ENCODE measurements at regions of chr4 and their contacts with region 1.

Region 1: DNA sequence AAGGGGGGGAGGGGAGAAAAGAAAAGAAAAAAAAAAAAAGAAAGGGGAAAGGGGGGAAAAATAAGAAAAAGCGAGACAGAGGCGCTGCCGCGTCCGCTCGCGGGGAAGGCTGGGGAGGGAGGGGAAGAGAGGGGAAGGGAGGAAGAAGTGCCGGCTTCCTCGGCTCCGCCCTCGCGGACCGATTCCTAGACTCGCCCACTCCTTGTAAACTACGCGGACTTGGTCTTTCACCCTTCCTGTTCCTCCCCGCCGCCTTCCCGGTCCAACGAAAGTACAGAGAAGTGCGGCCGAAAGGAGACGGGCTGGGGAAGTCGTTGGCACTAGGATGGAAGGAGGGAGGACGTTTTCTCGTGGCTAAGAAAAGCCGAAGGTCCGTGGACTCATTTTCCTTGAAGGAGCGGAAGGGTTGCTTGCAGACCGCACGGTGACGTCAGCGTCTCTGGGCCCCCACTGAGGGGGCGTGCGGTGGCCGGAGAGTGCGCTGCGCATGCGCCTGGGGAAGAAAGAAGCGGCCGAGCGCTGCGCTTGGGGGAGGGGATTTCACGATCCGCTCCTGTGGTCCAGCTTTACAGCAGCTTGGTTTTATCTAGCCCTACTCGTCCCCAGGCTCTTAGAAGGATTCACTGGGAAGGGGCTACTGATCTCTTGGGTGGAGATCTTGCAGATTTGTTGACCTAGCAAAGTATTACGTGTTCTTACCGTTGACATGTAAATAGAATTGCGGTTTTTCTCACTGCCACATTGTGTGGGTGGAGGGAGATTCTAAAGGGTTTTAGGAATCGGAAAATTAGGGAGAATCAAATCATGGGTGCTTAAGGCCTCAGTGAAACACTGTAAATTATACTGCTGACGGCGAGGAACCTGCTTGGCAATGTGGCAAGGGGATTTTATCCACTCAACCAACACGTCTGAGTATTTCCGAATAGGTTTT is at the start of gene CCNI:
- DNase-seq: peak; percentile 100
- ATAC-seq: peak; percentile 75
- H3K4me3 ChIP-seq: peak within 1 kb of the TSS; percentile 68 to 98 (median 81)
- H3K4me3 Mint-ChIP-seq: no peak within 1 kb of the TSS
- H3K27ac ChIP-seq: peak within 1 kb of the TSS; percentile 97 to 100
- H3K27ac Mint-ChIP-seq: peak within 1 kb of the TSS; percentile 100
- H3K4me1 ChIP-seq: peaks cover 48 to 52% of the 10 kb centered on the region in 2 donors
- H3K4me1 Mint-ChIP-seq: peaks cover 46% of the 10 kb centered on the region
- H3K27me3 ChIP-seq: no peaks in the 10 kb centered on the region
- H3K27me3 Mint-ChIP-seq: no peaks in the 10 kb centered on the region
- CTCF ChIP-seq: no peak
- total RNA-seq, gene CCNI: 314 and 328 TPM in 2 replicates

Region 2: DNA sequence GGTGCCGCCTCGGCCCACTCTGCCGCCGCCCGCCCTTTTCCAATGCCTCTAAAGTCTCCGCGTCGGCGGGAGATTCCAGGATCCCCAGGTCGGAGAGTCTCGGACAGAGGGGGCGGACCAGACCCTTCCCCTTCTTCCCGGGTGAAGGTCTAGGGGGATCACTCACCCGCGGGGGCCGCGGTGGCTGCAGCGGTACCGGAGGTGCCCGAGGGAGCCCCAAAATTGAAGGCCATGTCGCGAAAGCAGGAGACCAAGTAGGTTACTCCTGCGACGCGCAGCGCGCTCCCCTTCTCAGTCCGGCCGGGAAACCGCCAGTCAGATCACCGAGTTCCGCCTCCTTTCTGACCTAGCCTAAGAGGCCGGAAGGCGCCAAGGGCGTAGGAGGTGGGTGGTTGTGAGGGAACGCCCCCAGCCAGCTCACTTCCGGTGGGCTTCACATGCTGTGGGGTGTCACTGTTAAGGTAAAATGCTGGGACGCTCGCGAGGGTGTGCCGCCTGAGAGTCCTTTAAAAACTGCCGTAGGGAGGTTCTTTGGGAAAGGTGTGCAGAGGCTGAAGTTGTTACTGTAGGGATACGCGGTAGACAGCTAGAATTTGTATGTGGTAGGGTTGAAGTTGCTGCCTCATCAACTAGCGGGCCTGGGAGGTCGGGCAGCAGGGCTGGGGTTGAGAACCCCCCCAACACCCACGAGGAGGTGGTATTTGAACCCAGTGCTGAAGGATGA is 927.8 kb before region 1 on chr4 and contains the start of gene NUP54:
- CTCF ChIA-PET with region 1: no interaction called
- POLR2A ChIA-PET with region 1: no interaction called
- intact Hi-C with region 1: loop called (anchors 2 kb)
- DNase-seq: peak; percentile 95
- ATAC-seq: peak; percentile 98
- H3K4me3 ChIP-seq: peak within 1 kb of the TSS; percentile 71 to 98 (median 97)
- H3K4me3 Mint-ChIP-seq: peak within 1 kb of the TSS; percentile 98
- H3K27ac ChIP-seq: peak within 1 kb of the TSS; percentile 77 to 91
- H3K27ac Mint-ChIP-seq: peak within 1 kb of the TSS; percentile 89
- H3K4me1 ChIP-seq: peaks cover 22 to 28% of the 10 kb centered on the region in 2 donors
- H3K4me1 Mint-ChIP-seq: peaks cover 35% of the 10 kb centered on the region
- H3K27me3 ChIP-seq: no peaks in the 10 kb centered on the region
- H3K27me3 Mint-ChIP-seq: no peaks in the 10 kb centered on the region
- CTCF ChIP-seq: no peak
- total RNA-seq, gene NUP54: 71.0 and 71.4 TPM in 2 replicates

Region 3: GRCh38 chr4:76665139-76665538 is 411.0 kb before region 1 on chr4:
- CTCF ChIA-PET with region 1: no interaction called
- POLR2A ChIA-PET with region 1: no interaction called
- intact Hi-C with region 1: no loop called
- DNase-seq: no peak
- ATAC-seq: no peak
- H3K4me3 ChIP-seq: no peak overlapping the region
- H3K4me3 Mint-ChIP-seq: no peak overlapping the region
- H3K27ac ChIP-seq: no peak overlapping the region
- H3K27ac Mint-ChIP-seq: no peak overlapping the region
- H3K4me1 ChIP-seq: no peaks in the 10 kb centered on the region
- H3K4me1 Mint-ChIP-seq: no peaks in the 10 kb centered on the region
- H3K27me3 ChIP-seq: no peaks in the 10 kb centered on the region
- H3K27me3 Mint-ChIP-seq: no peaks in the 10 kb centered on the region
- CTCF ChIP-seq: no peak

Region 4: DNA sequence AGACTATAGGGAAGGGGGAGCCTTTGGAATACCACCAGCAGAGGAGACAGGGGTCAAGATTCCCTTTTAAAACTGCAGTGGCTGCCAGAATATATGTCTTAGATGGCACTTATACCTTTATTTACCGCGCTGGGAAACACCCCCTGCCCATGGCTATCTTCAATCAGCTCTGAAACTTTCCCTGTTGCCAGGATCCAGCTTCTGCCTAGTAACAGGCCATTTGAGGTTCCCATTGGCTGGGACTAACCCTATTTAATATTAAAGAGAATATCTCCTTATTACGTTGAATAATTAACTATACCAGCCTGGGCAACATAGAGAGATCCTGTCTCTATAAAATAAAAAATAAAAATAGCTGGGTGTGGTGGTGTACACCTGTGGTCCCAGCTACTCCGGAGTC is 202.0 kb before region 1 on chr4:
- CTCF ChIA-PET with region 1: no interaction called
- POLR2A ChIA-PET with region 1: no interaction called
- intact Hi-C with region 1: no loop called
- DNase-seq: no peak
- ATAC-seq: no peak
- H3K4me3 ChIP-seq: no peak overlapping the region
- H3K4me3 Mint-ChIP-seq: no peak overlapping the region
- H3K27ac ChIP-seq: no peak overlapping the region
- H3K27ac Mint-ChIP-seq: no peak overlapping the region
- H3K4me1 ChIP-seq: no peaks in the 10 kb centered on the region
- H3K4me1 Mint-ChIP-seq: no peaks in the 10 kb centered on the region
- H3K27me3 ChIP-seq: peaks cover 0 to 3% (median 0%) of the 10 kb centered on the region in 4 experiments
- H3K27me3 Mint-ChIP-seq: peaks cover 27% of the 10 kb centered on the region
- CTCF ChIP-seq: no peak

Region 5: GRCh38 chr4:76949276-76950051 is 126.7 kb before region 1 on chr4 and contains the start of gene SEPTIN11:
- CTCF ChIA-PET with region 1: no interaction called
- POLR2A ChIA-PET with region 1: no interaction called
- intact Hi-C with region 1: loop called (anchors 1 kb)
- DNase-seq: peak; percentile 89
- ATAC-seq: peak; percentile 80
- H3K4me3 ChIP-seq: peak within 1 kb of the TSS; percentile 34 to 87 (median 73)
- H3K4me3 Mint-ChIP-seq: peak within 1 kb of the TSS; percentile 93
- H3K27ac ChIP-seq: peak within 1 kb of the TSS in 1 of 2 donors; percentile 61
- H3K27ac Mint-ChIP-seq: peak within 1 kb of the TSS; percentile 86
- H3K4me1 ChIP-seq: peaks cover 10 to 16% of the 10 kb centered on the region in 2 donors
- H3K4me1 Mint-ChIP-seq: peaks cover 16% of the 10 kb centered on the region
- H3K27me3 ChIP-seq: no peaks in the 10 kb centered on the region
- H3K27me3 Mint-ChIP-seq: no peaks in the 10 kb centered on the region
- CTCF ChIP-seq: no peak
- total RNA-seq, gene SEPTIN11: 20.3 and 22.7 TPM in 2 replicates

Region 6: GRCh38 chr4:77095101-77095821 is 19.1 kb after region 1 on chr4:
- CTCF ChIA-PET with region 1: interaction called, 54 read pairs
- POLR2A ChIA-PET with region 1: interaction called, 3 read pairs
- intact Hi-C with region 1: loop called (anchors 1 kb)
- DNase-seq: peak; percentile 81
- ATAC-seq: peak; percentile 99
- H3K4me3 ChIP-seq: no peak overlapping the region
- H3K4me3 Mint-ChIP-seq: no peak overlapping the region
- H3K27ac ChIP-seq: no peak overlapping the region
- H3K27ac Mint-ChIP-seq: no peak overlapping the region
- H3K4me1 ChIP-seq: peaks cover 21 to 25% of the 10 kb centered on the region in 2 donors
- H3K4me1 Mint-ChIP-seq: peaks cover 23% of the 10 kb centered on the region
- H3K27me3 ChIP-seq: no peaks in the 10 kb centered on the region
- H3K27me3 Mint-ChIP-seq: no peaks in the 10 kb centered on the region
- CTCF ChIP-seq: peak; percentile 95

Region 7: DNA sequence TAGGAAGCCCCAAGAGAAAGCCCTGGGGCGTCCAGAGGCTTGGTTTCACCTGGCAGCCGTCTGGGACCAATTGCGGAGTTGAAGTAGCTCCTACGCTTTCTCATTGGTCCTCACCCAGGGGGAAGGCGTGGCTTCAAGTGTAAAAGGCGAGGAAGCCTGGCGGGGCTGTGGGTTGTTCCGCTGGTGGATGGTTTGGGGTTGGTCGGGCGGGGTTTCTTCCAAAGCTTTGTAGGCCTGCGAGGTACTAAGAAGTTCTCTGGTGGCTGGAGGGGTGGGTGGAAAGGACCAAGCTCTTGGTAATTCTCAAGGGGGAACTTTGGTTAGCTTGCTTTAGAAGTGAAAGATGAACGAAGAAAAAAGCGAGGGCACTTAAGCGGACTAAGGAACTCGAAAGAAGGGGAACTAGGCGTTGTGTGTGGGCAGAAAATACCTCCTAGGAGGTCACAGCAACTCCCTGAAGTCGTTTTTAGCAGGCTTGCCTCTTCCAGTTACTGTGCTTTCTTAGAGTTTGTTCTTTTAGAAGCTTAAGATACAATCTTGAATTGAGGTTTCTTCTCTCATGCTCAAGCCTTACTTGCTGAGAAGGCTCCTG is 117.5 kb after region 1 on chr4:
- CTCF ChIA-PET with region 1: interaction called, 4 read pairs
- POLR2A ChIA-PET with region 1: interaction called, 4 read pairs
- intact Hi-C with region 1: loop called (anchors 1 kb)
- DNase-seq: peak; percentile 91
- ATAC-seq: peak; percentile 92
- H3K4me3 ChIP-seq: peak overlapping the region; percentile 22 to 60 (median 49)
- H3K4me3 Mint-ChIP-seq: peak overlapping the region; percentile 91
- H3K27ac ChIP-seq: peak overlapping the region; percentile 69 to 86
- H3K27ac Mint-ChIP-seq: peak overlapping the region; percentile 97
- H3K4me1 ChIP-seq: peaks cover 36 to 49% of the 10 kb centered on the region in 2 donors
- H3K4me1 Mint-ChIP-seq: peaks cover 52% of the 10 kb centered on the region
- H3K27me3 ChIP-seq: no peaks in the 10 kb centered on the region
- H3K27me3 Mint-ChIP-seq: no peaks in the 10 kb centered on the region
- CTCF ChIP-seq: no peak

Region 8: DNA sequence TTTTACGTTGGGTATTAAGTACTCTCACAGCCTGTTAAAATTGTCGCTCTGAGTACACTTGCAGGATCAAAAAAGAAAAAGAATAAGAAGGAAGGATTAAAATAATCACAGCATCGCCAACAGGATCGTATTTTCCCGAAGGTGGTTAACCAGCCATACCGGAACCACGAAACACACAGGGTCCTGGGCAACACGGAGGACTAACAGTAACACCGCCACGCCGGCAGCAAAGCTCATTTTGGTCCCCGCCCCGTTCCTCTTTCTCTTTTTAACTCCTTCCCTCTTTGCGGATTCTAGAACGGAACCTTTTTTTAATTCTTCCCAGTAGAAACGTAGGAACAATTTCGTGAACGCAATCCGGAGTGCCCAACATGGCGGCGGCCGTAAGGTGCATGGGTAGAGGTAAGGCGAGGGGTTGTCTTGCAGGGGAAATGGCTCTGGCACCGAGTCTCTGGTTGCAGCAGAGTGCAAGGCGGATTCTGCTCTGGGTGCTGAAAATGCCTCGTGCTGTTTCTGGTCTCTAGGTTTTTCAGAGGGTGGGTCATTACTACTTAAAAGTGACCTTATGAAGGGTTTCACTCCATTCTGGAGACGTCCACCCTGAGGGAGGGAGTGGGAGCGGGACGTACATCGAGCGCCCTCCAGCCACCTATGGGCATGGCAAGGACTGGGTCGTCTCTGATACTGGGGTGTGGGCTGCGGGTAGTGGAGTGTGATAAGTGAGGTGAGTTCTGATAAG is 786.5 kb after region 1 on chr4 and contains the start of gene MRPL1:
- CTCF ChIA-PET with region 1: no interaction called
- POLR2A ChIA-PET with region 1: interaction called, 5 read pairs
- intact Hi-C with region 1: loop called (anchors 2 kb)
- DNase-seq: peak; percentile 95
- ATAC-seq: peak; percentile 86
- H3K4me3 ChIP-seq: peak within 1 kb of the TSS; percentile 68 to 98 (median 80)
- H3K4me3 Mint-ChIP-seq: peak within 1 kb of the TSS; percentile 99
- H3K27ac ChIP-seq: peak within 1 kb of the TSS; percentile 99 to 100
- H3K27ac Mint-ChIP-seq: peak within 1 kb of the TSS; percentile 98
- H3K4me1 ChIP-seq: peaks cover 17 to 21% of the 10 kb centered on the region in 2 donors
- H3K4me1 Mint-ChIP-seq: peaks cover 41% of the 10 kb centered on the region
- H3K27me3 ChIP-seq: no peaks in the 10 kb centered on the region
- H3K27me3 Mint-ChIP-seq: no peaks in the 10 kb centered on the region
- CTCF ChIP-seq: no peak
- total RNA-seq, gene MRPL1: 22.7 and 23.3 TPM in 2 replicates